Common myeloid progenitor, CD34-positive (primary cell): ENCODE measurements at regions of chr1 and their contacts with region 1.

Region 1: DNA sequence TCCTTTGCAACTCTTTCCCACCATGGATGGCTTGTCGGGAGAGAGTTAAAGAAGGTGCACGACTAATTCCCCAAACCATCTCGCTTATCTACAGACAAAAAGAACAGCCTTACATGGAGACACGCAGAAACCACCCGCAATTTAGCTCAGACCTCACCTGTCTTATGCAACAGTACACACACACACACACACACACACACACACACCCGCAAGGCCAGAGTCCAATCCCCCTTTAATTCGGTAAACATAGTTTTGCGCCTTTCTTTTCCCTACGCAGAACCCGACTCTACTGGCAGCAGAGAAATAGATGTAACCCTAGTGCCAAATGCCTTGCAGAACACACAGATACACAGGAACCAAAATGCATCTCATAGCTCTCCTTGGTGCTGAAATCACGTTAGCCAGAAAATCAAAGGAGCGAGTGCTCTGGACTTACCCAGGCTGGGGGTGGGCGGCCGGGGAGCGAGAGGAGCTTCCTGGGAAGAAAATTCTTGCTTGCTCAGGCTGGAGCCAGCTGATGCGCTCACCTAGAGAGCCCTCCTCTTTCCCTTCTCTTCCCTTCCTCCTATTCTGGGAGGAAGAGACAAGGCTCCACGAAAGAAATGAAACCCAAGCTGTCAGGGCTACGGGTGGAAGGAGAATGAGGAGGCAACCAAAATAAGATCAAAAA is 470 bp downstream of the TNR start:
- DNase-seq: peak; percentile 20 to 71 (median 68)
- H3K4me3 ChIP-seq: peak overlapping the region in 1 of 7 experiments; percentile 13
- H3K27ac ChIP-seq: no peak overlapping the region
- H3K4me1 ChIP-seq: peaks cover 0 to 2% (median 0%) of the 10 kb centered on the region in 4 experiments
- H3K27me3 ChIP-seq: peaks cover 0 to 22% (median 7%) of the 10 kb centered on the region in 5 experiments

Region 2: GRCh38 chr1:175481126-175482066 is 261.5 kb before region 1 on chr1:
- CTCF ChIA-PET with region 1: interaction called, 10 read pairs
- POLR2A ChIA-PET with region 1: no interaction called
- DNase-seq: peak; percentile 29 to 62 (median 55)
- H3K4me3 ChIP-seq: no peak overlapping the region
- H3K27ac ChIP-seq: no peak overlapping the region
- H3K4me1 ChIP-seq: no peaks in the 10 kb centered on the region
- H3K27me3 ChIP-seq: peaks cover 0 to 8% (median 2%) of the 10 kb centered on the region in 5 experiments

Region 3: GRCh38 chr1:175679981-175680652 is 62.8 kb before region 1 on chr1:
- CTCF ChIA-PET with region 1: no interaction called
- POLR2A ChIA-PET with region 1: no interaction called
- DNase-seq: no peak
- H3K4me3 ChIP-seq: no peak overlapping the region
- H3K27ac ChIP-seq: no peak overlapping the region
- H3K4me1 ChIP-seq: no peaks in the 10 kb centered on the region
- H3K27me3 ChIP-seq: peaks cover 0 to 2% (median 0%) of the 10 kb centered on the region in 5 experiments

Region 4: DNA sequence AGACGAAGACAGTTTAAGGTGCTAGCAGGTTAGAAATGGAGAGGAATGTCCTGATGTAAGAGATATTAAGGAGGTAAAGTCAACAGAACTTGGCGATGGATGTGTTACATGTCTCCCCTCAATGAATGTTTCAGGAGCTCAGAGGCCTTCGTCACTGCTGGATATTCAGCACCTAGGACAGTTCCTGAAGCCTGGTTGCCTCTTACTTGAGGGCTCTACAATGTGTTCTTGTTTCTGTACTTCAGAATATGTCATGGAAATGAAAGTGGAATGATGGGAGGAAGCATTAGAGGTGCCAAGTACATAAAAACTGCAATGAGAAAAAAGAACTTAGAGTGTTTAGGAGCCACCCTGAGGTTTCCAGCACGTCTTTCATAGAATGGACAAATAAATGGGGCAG is 17.2 kb before region 1 on chr1:
- CTCF ChIA-PET with region 1: interaction called, 10 read pairs
- POLR2A ChIA-PET with region 1: no interaction called
- DNase-seq: peak; percentile 29 to 63 (median 52)
- H3K4me3 ChIP-seq: no peak overlapping the region
- H3K27ac ChIP-seq: no peak overlapping the region
- H3K4me1 ChIP-seq: no peaks in the 10 kb centered on the region
- H3K27me3 ChIP-seq: peaks cover 0 to 2% (median 0%) of the 10 kb centered on the region in 5 experiments

Region 5: GRCh38 chr1:175757381-175758015 is 14.6 kb after region 1 on chr1:
- CTCF ChIA-PET with region 1: interaction called, 32 read pairs
- POLR2A ChIA-PET with region 1: no interaction called
- DNase-seq: peak in 2 of 3 donors; percentile 10 to 23
- H3K4me3 ChIP-seq: no peak overlapping the region
- H3K27ac ChIP-seq: no peak overlapping the region
- H3K4me1 ChIP-seq: no peaks in the 10 kb centered on the region
- H3K27me3 ChIP-seq: no peaks in the 10 kb centered on the region

Region 6: DNA sequence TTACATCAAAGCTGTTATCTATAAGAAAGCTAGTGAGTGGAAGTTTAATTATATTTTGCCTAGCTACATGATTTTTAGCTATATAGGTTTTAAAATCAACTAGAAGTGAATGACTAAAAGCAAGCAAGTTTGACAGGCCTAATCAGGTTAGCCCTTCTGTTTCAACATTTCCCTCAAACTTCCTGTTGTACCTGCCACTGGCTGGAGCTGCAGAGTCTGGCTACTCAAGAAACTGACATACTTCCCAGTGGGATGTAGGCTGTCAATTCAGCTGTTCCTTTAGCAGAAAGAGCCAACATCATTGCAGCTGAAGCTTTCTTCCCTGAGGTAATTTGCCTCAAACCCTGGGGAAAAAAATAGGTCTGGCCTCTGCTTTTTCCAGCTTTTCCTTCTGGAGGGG is 87.6 kb after region 1 on chr1:
- CTCF ChIA-PET with region 1: no interaction called
- POLR2A ChIA-PET with region 1: no interaction called
- DNase-seq: peak in 2 of 3 donors; percentile 69 to 76
- H3K4me3 ChIP-seq: no peak overlapping the region
- H3K27ac ChIP-seq: peak overlapping the region in 1 of 2 experiments; percentile 29
- H3K4me1 ChIP-seq: peaks cover 8 to 19% (median 12%) of the 10 kb centered on the region in 4 experiments
- H3K27me3 ChIP-seq: no peaks in the 10 kb centered on the region

Region 7: DNA sequence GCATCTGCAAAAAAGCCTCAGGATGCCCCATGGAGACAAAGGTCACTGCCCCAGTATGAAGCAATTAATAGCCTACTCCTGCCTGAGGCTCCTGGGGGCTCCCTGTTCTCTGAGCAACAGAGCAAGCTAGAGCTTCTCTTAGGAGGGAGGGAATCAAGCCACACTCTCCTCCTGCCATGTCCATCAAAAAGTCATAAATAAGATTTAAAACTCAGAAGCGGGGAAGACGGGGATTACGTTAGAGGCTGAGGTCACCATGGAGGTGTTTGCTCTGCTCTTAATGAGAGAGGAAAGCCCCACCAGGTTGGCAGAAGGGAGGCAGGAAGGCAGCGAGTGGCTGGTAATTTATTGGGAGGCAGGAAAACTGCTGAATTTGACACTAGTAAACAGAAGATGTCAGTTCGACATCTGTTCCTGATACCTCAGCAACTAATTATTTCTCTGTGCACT is 98.8 kb after region 1 on chr1:
- CTCF ChIA-PET with region 1: no interaction called
- POLR2A ChIA-PET with region 1: no interaction called
- DNase-seq: no peak
- H3K4me3 ChIP-seq: no peak overlapping the region
- H3K27ac ChIP-seq: no peak overlapping the region
- H3K4me1 ChIP-seq: peaks cover 0 to 28% (median 24%) of the 10 kb centered on the region in 4 experiments
- H3K27me3 ChIP-seq: peaks cover 0 to 2% (median 0%) of the 10 kb centered on the region in 5 experiments